IMR-90 (cell line): ENCODE measurements at regions of chr17 and their contacts with region 1.

Region 1: GRCh38 chr17:62950086-62950485 is 15.9 kb upstream of the TANC2 start:
- DNase-seq: peak; percentile 45
- ATAC-seq: no peak
- H3K4me3 ChIP-seq: no peak overlapping the region
- H3K27ac ChIP-seq: no peak overlapping the region
- H3K4me1 ChIP-seq: no peaks in the 10 kb centered on the region
- H3K27me3 ChIP-seq: no peaks in the 10 kb centered on the region; the same call in 1 of the 2 replicates
- CTCF ChIP-seq: no peak
- POLR2A ChIP-seq: no peak
- RAD21 ChIP-seq: no peak

Region 2: DNA sequence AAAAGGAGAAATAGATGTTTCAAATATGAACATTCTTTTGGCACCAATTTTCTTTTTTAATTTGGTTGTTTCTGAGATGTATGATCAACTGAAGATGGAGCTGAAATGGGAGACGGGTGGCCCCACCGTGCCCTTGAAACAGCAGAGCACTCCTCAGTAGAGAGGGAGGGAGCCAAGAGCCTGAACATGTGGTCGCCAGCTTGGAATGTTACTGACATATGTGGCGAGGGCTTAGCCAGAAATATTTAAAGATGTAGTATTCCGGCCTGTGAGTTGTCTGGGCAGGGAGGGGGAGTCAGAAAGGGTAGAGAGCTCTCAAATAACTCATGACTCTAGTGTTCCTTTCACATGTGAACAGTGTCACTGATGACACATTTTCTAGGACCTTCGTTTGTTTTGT is 335.9 kb before region 1 on chr17:
- CTCF ChIA-PET with region 1: no interaction called
- POLR2A ChIA-PET with region 1: no interaction called
- dilution Hi-C with region 1: no loop called
- in situ Hi-C with region 1: no loop called
- intact Hi-C with region 1: no loop called
- DNase-seq: peak; percentile 92
- ATAC-seq: peak; percentile 86
- H3K4me3 ChIP-seq: no peak overlapping the region
- H3K27ac ChIP-seq: no peak overlapping the region
- H3K4me1 ChIP-seq: peaks cover 6% of the 10 kb centered on the region
- H3K27me3 ChIP-seq: no peaks in the 10 kb centered on the region
- CTCF ChIP-seq: no peak
- POLR2A ChIP-seq: no peak
- RAD21 ChIP-seq: no peak

Region 3: GRCh38 chr17:62916681-62917571 is 33.2 kb before region 1 on chr17:
- CTCF ChIA-PET with region 1: no interaction called
- POLR2A ChIA-PET with region 1: no interaction called
- dilution Hi-C with region 1: no loop called
- in situ Hi-C with region 1: no loop called
- intact Hi-C with region 1: loop called (anchors 5 kb)
- DNase-seq: peak; percentile 70
- ATAC-seq: no peak
- H3K4me3 ChIP-seq: no peak overlapping the region
- H3K27ac ChIP-seq: no peak overlapping the region
- H3K4me1 ChIP-seq: peaks cover 7% of the 10 kb centered on the region
- H3K27me3 ChIP-seq: no peaks in the 10 kb centered on the region
- CTCF ChIP-seq: no peak
- POLR2A ChIP-seq: no peak
- RAD21 ChIP-seq: no peak

Region 4: GRCh38 chr17:62968445-62968923 is 18.4 kb after region 1 on chr17:
- CTCF ChIA-PET with region 1: no interaction called
- POLR2A ChIA-PET with region 1: no interaction called
- dilution Hi-C with region 1: no loop called
- in situ Hi-C with region 1: no loop called
- intact Hi-C with region 1: no loop called
- DNase-seq: peak; percentile 94
- ATAC-seq: peak; percentile 43
- H3K4me3 ChIP-seq: peak overlapping the region; percentile 90
- H3K27ac ChIP-seq: peak overlapping the region; percentile 32; the same call in 1 of the 2 replicates
- H3K4me1 ChIP-seq: peaks cover 16% of the 10 kb centered on the region
- H3K27me3 ChIP-seq: no peaks in the 10 kb centered on the region
- CTCF ChIP-seq: peak; percentile 99
- POLR2A ChIP-seq: peak; percentile 77
- RAD21 ChIP-seq: peak; percentile 94